CD4-positive, alpha-beta memory T cell (primary cell): ENCODE measurements at regions of chr3 and their contacts with region 1.

Region 1: GRCh38 chr3:27145719-27146118 is 223.5 kb downstream of the NEK10 start:
- DNase-seq: no peak
- H3K4me3 ChIP-seq: no peak overlapping the region
- H3K4me3 Mint-ChIP-seq: no peak overlapping the region
- H3K27ac ChIP-seq: no peak overlapping the region
- H3K27ac Mint-ChIP-seq: no peak overlapping the region
- H3K4me1 ChIP-seq: no peaks in the 10 kb centered on the region
- H3K4me1 Mint-ChIP-seq: no peaks in the 10 kb centered on the region
- H3K27me3 ChIP-seq: no peaks in the 10 kb centered on the region
- H3K27me3 Mint-ChIP-seq: no peaks in the 10 kb centered on the region

Region 2: GRCh38 chr3:27134165-27134796 is 11.4 kb before region 1 on chr3:
- CTCF ChIA-PET with region 1: interaction called, 12 read pairs
- POLR2A ChIA-PET with region 1: no interaction called
- intact Hi-C with region 1: no loop called
- DNase-seq: peak; percentile 41 to 53 (median 49)
- H3K4me3 ChIP-seq: no peak overlapping the region
- H3K4me3 Mint-ChIP-seq: no peak overlapping the region
- H3K27ac ChIP-seq: no peak overlapping the region
- H3K27ac Mint-ChIP-seq: no peak overlapping the region
- H3K4me1 ChIP-seq: no peaks in the 10 kb centered on the region
- H3K4me1 Mint-ChIP-seq: no peaks in the 10 kb centered on the region
- H3K27me3 ChIP-seq: no peaks in the 10 kb centered on the region
- H3K27me3 Mint-ChIP-seq: peaks cover 0 to 2% of the 10 kb centered on the region in 2 donors

Region 3: GRCh38 chr3:27319847-27320526 is 174.3 kb after region 1 on chr3:
- CTCF ChIA-PET with region 1: no interaction called
- POLR2A ChIA-PET with region 1: no interaction called
- intact Hi-C with region 1: no loop called
- DNase-seq: no peak
- H3K4me3 ChIP-seq: no peak overlapping the region
- H3K4me3 Mint-ChIP-seq: no peak overlapping the region
- H3K27ac ChIP-seq: no peak overlapping the region
- H3K27ac Mint-ChIP-seq: no peak overlapping the region
- H3K4me1 ChIP-seq: no peaks in the 10 kb centered on the region
- H3K4me1 Mint-ChIP-seq: no peaks in the 10 kb centered on the region
- H3K27me3 ChIP-seq: no peaks in the 10 kb centered on the region
- H3K27me3 Mint-ChIP-seq: no peaks in the 10 kb centered on the region